Psoas muscle (tissue), 8 donors: ENCODE measurements at regions of chr17 and their contacts with region 1.

Region 1: DNA sequence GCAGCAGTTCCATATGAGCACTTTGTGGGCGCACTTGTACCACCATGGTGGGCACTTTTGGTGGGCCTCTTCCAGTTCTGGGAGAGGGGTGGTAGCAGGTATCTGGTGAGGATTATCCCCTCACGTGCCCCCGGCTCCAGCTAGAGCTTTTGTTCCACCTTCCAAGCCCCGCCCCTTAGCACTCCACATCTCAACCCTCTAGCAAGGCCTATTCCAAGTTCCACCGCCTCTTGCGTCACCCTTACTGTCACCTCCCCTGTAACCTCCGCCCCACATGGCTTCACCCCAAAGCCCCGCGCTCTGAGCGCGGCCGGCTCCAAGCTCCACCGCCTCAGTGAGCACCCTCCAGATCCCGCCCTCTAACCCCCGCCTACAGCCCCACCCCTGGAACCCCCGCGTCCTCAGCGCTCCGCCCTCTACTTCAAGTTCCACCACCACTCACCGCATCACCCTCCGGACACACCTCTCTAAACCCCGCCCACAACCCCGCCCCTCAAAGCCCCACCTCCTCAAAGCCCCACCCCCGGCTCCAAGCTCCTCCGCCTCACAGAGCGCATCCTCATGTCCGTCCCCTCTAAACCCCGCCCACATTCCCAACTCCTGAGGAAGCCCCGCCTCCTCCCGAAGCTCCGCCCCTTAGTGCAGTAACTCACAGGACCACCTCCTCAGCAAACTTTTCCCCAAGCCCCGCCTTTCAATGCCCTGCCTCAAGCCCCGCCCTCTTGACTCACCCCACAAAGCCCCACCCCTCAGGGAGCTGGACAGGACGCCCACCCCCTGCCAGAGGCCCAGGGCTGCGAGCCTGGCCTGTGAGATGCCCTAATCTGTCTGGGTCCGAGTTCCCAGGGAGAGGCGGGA is 11.1 kb downstream of the SCN4A start:
- DNase-seq: peak; percentile 83 to 95
- ATAC-seq: peak; percentile 64 to 76 (median 75)
- H3K4me3 ChIP-seq: peak overlapping the region; percentile 5
- H3K27ac ChIP-seq: peak overlapping the region; percentile 89
- H3K4me1 ChIP-seq: peaks cover 52% of the 10 kb centered on the region
- H3K27me3 ChIP-seq: no peaks in the 10 kb centered on the region
- CTCF ChIP-seq: no peak

Region 2: GRCh38 chr17:63904316-63904715 is 57.3 kb before region 1 on chr17:
- intact Hi-C with region 1: no loop called
- DNase-seq: no peak
- ATAC-seq: no peak
- H3K4me3 ChIP-seq: no peak overlapping the region
- H3K27ac ChIP-seq: no peak overlapping the region
- H3K4me1 ChIP-seq: no peaks in the 10 kb centered on the region
- H3K27me3 ChIP-seq: no peaks in the 10 kb centered on the region
- CTCF ChIP-seq: no peak

Region 3: GRCh38 chr17:63919311-63919723 is 42.3 kb before region 1 on chr17:
- intact Hi-C with region 1: no loop called
- DNase-seq: peak; percentile 47 to 65
- ATAC-seq: peak; percentile 87 to 97 (median 92)
- H3K4me3 ChIP-seq: no peak overlapping the region
- H3K27ac ChIP-seq: no peak overlapping the region
- H3K4me1 ChIP-seq: no peaks in the 10 kb centered on the region
- H3K27me3 ChIP-seq: no peaks in the 10 kb centered on the region
- CTCF ChIP-seq: peak; percentile 95

Region 4: GRCh38 chr17:63974594-63975192 is 13.1 kb after region 1 on chr17:
- intact Hi-C with region 1: loop called in 1 of 2 experiments (anchors 1 kb)
- DNase-seq: peak; percentile 42 to 81
- ATAC-seq: peak; percentile 67 to 77 (median 71)
- H3K4me3 ChIP-seq: peak overlapping the region; percentile 25
- H3K27ac ChIP-seq: peak overlapping the region; percentile 93
- H3K4me1 ChIP-seq: peaks cover 70% of the 10 kb centered on the region
- H3K27me3 ChIP-seq: no peaks in the 10 kb centered on the region
- CTCF ChIP-seq: no peak